Activated naive CD4-positive, alpha-beta T cell treated with anti-CD3 and anti-CD28 coated beads, Interleukin-2, amount 10 ng/mL, durations not matched to agents 7 days and 5 days (primary cell): ENCODE measurements at regions of chr4 and their contacts with region 1.

Region 1: DNA sequence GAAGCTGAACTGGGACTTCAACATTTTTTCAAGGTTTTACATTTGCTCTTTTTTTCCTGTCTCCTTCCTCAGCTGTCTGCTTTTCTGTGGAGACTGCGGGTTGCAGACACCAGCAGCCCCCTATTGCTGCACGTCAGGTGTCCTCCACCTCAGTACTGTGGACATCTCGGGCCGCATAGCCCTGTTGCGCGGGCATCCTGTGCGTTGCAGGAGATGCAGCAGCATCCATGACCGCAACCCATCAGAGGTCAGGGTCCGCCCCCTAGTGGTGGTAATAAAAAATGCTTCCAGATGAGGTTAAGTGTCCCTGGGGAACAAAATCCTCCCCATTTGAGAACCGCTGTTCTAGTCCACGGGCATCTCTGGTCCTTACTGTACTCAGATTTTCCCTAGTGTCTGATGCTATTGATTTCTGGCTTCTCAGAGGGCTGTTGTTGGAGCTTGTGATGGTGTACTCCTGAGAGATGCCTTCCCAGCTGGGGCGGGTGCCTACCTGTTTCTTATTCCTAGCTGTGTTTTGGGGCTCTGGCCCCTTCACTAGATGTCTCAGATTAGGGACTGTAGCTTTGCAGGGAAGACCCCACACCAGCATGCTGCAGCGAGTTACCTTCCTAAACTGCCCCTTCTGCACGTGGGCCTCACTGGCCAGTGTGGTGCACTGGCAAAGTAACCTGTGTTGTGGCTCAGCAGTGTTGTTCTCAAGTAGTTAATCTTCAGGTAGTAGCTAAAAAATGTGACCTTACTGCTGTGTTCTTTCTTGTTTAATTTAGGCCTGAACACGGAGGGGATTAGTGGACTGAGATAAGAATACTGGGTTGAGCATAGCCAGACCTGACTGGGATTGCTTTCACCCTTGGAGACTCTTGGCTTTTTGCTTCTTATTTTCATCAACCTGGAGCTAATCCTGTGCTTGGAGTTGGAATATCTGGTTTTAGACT is 28.2 kb downstream of the NSD2 start:
- DNase-seq: peak; percentile 84
- H3K4me3 Mint-ChIP-seq: no peak overlapping the region
- H3K27ac Mint-ChIP-seq: peak overlapping the region; percentile 91
- H3K4me1 Mint-ChIP-seq: peaks cover 80% of the 10 kb centered on the region
- H3K27me3 Mint-ChIP-seq: no peaks in the 10 kb centered on the region

Region 2: DNA sequence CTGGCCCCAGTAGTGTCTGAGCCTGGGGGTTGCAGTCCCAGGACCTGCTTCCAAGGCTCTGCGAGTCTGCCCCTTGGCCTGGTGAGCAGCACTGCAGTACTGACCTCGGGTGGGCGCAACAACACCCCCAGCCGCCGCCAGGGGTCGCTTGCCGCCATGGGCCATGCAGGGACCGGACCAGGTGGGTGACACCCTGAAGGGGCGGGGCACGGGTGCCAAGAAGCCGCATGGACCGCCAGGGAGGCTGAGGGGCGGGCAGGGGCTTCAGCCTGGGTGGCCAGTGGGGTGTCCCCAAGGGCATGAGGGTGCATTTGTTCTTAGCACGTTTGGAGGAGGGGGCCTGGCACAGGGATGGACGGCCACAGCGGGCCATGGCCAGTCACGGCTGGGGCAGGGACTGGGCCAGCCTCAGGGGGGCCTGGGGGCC is 153.1 kb before region 1 on chr4:
- CTCF ChIA-PET with region 1: interaction called, 12 read pairs
- DNase-seq: peak; percentile 85
- H3K4me3 Mint-ChIP-seq: no peak overlapping the region
- H3K27ac Mint-ChIP-seq: no peak overlapping the region
- H3K4me1 Mint-ChIP-seq: peaks cover 5% of the 10 kb centered on the region
- H3K27me3 Mint-ChIP-seq: no peaks in the 10 kb centered on the region

Region 3: DNA sequence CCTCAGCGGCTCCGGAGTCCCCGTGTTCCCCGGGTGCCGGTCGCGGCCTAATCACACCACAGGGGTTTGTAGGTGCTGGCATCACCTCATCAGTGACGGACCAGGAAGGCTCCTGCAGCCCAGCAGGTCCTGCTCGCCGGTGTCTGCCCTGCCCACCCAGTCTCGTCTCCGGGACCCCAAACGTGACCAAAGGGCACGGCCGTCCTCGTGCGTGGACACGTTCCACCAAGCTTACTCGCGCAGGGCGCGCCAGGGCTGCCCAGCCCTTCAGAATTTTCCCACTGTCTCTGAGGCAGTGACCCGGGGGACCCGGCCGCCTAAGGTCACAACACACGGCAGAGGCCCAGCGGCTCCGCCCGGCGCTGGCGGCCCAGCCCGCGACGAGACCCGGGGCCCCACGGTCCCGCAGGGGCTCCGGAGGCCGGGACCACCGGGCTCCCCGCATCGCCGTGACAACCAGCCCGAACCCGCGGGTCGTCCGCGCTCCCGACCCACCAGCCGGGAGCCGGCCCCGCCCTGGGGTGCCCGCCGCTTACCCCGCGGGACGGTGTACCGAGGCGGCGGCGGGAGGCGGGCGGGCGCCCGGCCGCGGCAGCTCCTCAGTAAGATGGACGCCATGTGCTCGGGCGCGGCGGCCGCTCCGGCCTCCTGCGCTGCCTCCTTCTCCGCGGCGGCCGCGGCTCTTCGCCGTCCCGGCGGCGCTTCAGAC is 43.9 kb before region 1 on chr4:
- CTCF ChIA-PET with region 1: interaction called, 16 read pairs
- DNase-seq: peak; percentile 48
- H3K4me3 Mint-ChIP-seq: peak overlapping the region; percentile 79
- H3K27ac Mint-ChIP-seq: peak overlapping the region; percentile 70
- H3K4me1 Mint-ChIP-seq: peaks cover 49% of the 10 kb centered on the region
- H3K27me3 Mint-ChIP-seq: no peaks in the 10 kb centered on the region

Region 4: DNA sequence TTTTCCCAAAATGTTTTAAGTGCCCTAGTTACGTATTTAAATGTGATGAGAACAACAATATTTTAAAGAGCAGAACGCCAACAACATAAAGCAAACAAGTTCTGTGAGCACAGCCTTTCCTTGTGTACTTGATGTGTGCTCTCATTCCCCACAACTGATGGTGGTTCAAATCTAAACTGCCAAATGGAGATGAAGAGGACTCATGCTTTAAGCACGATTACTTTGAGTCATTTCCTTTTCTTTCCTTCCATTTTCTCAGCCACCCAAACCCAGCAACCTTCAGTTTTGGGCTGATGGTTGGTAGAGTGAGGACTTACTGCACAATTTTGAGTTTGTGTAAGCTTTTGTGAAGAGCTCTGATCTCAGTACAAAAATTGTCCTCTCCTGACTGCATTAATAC is 26.5 kb before region 1 on chr4:
- CTCF ChIA-PET with region 1: interaction called, 30 read pairs
- DNase-seq: peak; percentile 39
- H3K4me3 Mint-ChIP-seq: peak overlapping the region; percentile 97
- H3K27ac Mint-ChIP-seq: peak overlapping the region; percentile 96
- H3K4me1 Mint-ChIP-seq: peaks cover 62% of the 10 kb centered on the region
- H3K27me3 Mint-ChIP-seq: no peaks in the 10 kb centered on the region

Region 5: GRCh38 chr4:1887052-1887451 is 12.4 kb before region 1 on chr4:
- CTCF ChIA-PET with region 1: interaction called, 16 read pairs
- DNase-seq: no peak
- H3K4me3 Mint-ChIP-seq: no peak overlapping the region
- H3K27ac Mint-ChIP-seq: peak overlapping the region; percentile 50
- H3K4me1 Mint-ChIP-seq: peaks cover 40% of the 10 kb centered on the region
- H3K27me3 Mint-ChIP-seq: no peaks in the 10 kb centered on the region

Region 6: GRCh38 chr4:1976416-1977352 is 77.3 kb after region 1 on chr4:
- CTCF ChIA-PET with region 1: no interaction called
- DNase-seq: no peak
- H3K4me3 Mint-ChIP-seq: no peak overlapping the region
- H3K27ac Mint-ChIP-seq: peak overlapping the region; percentile 37
- H3K4me1 Mint-ChIP-seq: peaks cover 6% of the 10 kb centered on the region
- H3K27me3 Mint-ChIP-seq: no peaks in the 10 kb centered on the region